ENCODE measurements at regions of chr1 and their contacts with region 1.

Region 1: DNA sequence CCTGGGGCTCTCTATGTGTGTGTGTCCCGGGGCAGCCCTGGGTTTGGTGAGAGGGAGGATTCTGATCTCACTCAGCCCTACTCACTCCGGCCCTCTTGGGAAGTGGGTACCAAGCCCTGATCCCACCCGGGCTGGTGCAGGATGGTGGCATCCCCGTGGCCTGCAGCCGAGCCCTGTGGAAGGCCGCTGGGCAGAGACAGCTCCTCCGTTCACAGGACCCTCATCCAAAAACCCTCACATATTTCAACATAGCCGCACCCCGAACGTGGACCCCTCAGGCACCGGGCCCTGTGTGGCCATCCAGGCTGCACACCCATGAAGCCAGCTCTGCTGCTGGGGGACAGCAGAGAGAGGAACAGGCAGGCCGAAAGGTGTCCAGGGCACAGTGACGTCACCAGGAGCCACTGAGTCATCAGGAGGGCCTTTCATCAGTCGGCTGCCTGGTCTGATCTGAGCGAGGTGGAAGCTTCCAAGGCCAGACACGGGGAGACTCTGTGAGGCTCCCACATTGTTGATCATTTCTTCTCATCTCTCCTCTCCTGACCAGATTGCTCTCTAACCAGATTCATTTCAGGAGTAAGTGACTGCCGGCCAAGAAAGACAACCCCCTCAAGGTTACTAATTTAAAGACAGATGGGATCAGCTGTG is 16.2 kb upstream of the GPR157 start:
- DNase-seq: no peak
- H3K4me3 ChIP-seq: no peak overlapping the region
- H3K27ac ChIP-seq: no peak overlapping the region
- H3K4me1 ChIP-seq: no peaks in the 10 kb centered on the region; a peak in 1 of 7 replicates
- H3K27me3 ChIP-seq: no peaks in the 10 kb centered on the region
- CTCF ChIP-seq: no peak
- EP300 ChIP-seq: no peak
- POLR2A ChIP-seq: no peak
- RAD21 ChIP-seq: no peak

Region 2: DNA sequence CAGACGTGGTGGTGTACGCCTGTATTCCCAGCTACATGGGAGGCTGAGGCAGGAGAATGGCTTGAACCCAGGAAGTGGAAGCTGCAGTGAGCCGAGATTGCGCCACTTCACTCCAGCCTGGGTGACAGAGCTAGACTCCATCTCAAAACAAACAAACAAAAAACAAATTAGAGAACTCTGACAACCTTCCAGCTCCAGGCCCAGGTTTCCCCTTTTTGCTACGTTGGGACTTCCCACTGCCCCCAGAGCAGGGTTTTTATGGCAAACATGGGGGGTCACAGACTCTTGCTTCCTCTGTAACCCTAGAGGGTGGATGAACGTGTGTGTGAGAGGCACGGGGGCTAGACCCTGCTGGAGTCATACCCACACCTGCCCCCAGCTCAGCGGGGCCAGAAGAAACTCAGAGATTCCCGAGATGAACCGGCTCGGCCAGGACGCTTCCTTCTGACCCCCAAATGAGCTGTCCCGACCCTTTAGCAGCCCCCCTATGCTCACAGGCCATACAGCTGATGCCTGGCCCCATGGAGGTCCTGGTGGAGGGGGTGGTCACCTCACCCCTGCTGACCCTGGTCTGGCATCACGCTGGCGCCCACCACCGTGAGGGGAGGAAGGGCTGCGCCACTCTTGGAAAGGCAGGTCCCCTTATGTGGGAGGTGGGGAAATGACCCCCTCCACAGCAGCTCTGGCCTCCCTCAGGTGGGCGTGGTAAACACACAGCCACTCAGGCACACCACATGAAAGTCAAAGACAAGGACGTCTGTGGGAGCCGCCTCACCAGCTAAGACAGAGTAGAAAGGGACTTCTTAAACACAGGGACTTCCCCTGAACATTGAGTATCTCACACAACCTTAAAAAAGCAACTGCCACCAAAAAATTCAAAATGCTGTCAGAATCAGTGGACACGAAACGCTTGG is 23.4 kb before region 1 on chr1:
- CTCF ChIA-PET with region 1: interaction called, 16 read pairs
- POLR2A ChIA-PET with region 1: no interaction called
- DNase-seq: no peak
- H3K4me3 ChIP-seq: no peak overlapping the region
- H3K27ac ChIP-seq: no peak overlapping the region
- H3K4me1 ChIP-seq: 0 out of 7 replicates have a peak, but pooled peaks cover 0 to 2% (median 0%) of the 10 kb centered on the region in 4 experiments
- H3K27me3 ChIP-seq: no peaks in the 10 kb centered on the region
- CTCF ChIP-seq: no peak
- EP300 ChIP-seq: no peak
- POLR2A ChIP-seq: no peak
- RAD21 ChIP-seq: no peak

Region 3: GRCh38 chr1:9160079-9160717 is 15.1 kb after region 1 on chr1:
- CTCF ChIA-PET with region 1: interaction called, 24 read pairs
- POLR2A ChIA-PET with region 1: interaction called, 4 read pairs
- DNase-seq: no peak
- H3K4me3 ChIP-seq: no peak overlapping the region
- H3K27ac ChIP-seq: no peak overlapping the region
- H3K4me1 ChIP-seq: peaks cover 0 to 18% (median 4%) of the 10 kb centered on the region in 4 experiments; a peak in 6 of 7 replicates
- H3K27me3 ChIP-seq: no peaks in the 10 kb centered on the region
- CTCF ChIP-seq: no peak
- EP300 ChIP-seq: no peak
- POLR2A ChIP-seq: no peak
- RAD21 ChIP-seq: no peak

Region 4: GRCh38 chr1:9181176-9181906 is 36.2 kb after region 1 on chr1:
- CTCF ChIA-PET with region 1: interaction called, 11 read pairs
- POLR2A ChIA-PET with region 1: interaction called, 3 read pairs
- DNase-seq: peak in 1 of 2 experiments; percentile 97
- H3K4me3 ChIP-seq: peak overlapping the region; percentile 54 to 87 (median 78)
- H3K27ac ChIP-seq: no peak overlapping the region
- H3K4me1 ChIP-seq: peaks cover 4 to 13% (median 7%) of the 10 kb centered on the region in 4 experiments; a peak in 6 of 7 replicates
- H3K27me3 ChIP-seq: peaks cover 0 to 23% (median 12%) of the 10 kb centered on the region in 4 experiments; a peak in 5 of 7 replicates
- CTCF ChIP-seq: peak; percentile 79 to 97 (median 88)
- EP300 ChIP-seq: no peak
- POLR2A ChIP-seq: no peak; a peak in 1 of 3 replicates
- RAD21 ChIP-seq: peak; percentile 38 to 58

Region 5: GRCh38 chr1:9196129-9197040 is 51.2 kb after region 1 on chr1:
- CTCF ChIA-PET with region 1: interaction called, 39 read pairs
- POLR2A ChIA-PET with region 1: interaction called, 3 read pairs
- DNase-seq: peak in 1 of 2 experiments; percentile 82
- H3K4me3 ChIP-seq: no peak overlapping the region
- H3K27ac ChIP-seq: no peak overlapping the region
- H3K4me1 ChIP-seq: peaks cover 0 to 11% (median 6%) of the 10 kb centered on the region in 4 experiments; a peak in 6 of 7 replicates
- H3K27me3 ChIP-seq: peaks cover 36 to 48% (median 46%) of the 10 kb centered on the region in 4 experiments
- CTCF ChIP-seq: peak; percentile 66 to 89 (median 69)
- EP300 ChIP-seq: no peak
- POLR2A ChIP-seq: no peak
- RAD21 ChIP-seq: peak; percentile 86 to 91

Region 6: DNA sequence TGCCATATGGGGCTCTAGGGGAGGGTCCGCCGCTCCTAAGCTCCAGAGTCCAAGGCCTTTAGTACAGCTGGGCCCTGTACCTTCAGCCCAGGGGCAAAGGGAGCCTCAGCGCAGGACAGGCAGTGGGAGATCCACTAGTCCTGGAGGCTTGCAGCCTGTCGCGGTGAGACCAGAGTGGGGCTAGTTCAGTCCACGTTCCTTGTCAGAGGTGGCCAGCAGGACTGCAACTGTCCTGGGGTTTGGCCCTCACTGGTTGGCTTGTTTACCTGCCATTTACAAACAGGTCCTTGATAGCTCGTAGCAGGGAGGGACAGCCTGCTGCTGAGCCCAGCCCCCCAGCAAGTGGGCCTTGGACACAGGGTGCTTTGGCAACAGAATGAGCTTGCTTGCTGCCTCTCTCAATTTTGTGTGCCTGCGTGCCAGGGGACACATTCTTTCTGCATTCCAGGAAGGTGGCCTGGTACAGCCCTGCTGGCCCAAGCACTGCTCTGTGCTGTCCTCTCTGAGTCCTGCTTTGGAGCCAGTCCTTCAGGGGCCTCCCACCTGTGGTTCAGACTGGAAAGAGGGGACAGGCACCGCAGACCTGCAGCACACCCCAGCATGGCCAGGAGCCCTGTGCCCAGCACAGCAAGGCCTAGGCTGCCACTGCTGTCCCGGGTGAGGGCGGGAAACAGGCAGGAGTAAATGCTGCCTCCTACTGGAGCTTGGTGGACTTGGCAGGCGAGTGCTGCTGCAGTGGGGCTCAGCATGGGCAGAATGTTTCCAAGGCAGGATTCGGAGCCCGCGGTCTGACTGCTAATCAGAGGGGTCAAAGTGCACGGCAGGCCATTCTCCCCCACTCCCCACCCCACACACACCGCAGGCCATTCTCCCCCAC is 104.6 kb after region 1 on chr1:
- CTCF ChIA-PET with region 1: interaction called, 14 read pairs
- POLR2A ChIA-PET with region 1: no interaction called
- DNase-seq: peak in 1 of 2 experiments; percentile 87
- H3K4me3 ChIP-seq: no peak overlapping the region
- H3K27ac ChIP-seq: no peak overlapping the region; the same call in none of the 2 replicates
- H3K4me1 ChIP-seq: peaks cover 17 to 37% (median 30%) of the 10 kb centered on the region in 4 experiments
- H3K27me3 ChIP-seq: no peaks in the 10 kb centered on the region; a peak in 1 of 7 replicates
- CTCF ChIP-seq: peak; percentile 90 to 99 (median 98)
- EP300 ChIP-seq: no peak
- POLR2A ChIP-seq: no peak
- RAD21 ChIP-seq: peak; percentile 80 to 87

Measured in H1 (cell line).